ENCODE measurements at regions of chr6 and their contacts with region 1.

Region 1: DNA sequence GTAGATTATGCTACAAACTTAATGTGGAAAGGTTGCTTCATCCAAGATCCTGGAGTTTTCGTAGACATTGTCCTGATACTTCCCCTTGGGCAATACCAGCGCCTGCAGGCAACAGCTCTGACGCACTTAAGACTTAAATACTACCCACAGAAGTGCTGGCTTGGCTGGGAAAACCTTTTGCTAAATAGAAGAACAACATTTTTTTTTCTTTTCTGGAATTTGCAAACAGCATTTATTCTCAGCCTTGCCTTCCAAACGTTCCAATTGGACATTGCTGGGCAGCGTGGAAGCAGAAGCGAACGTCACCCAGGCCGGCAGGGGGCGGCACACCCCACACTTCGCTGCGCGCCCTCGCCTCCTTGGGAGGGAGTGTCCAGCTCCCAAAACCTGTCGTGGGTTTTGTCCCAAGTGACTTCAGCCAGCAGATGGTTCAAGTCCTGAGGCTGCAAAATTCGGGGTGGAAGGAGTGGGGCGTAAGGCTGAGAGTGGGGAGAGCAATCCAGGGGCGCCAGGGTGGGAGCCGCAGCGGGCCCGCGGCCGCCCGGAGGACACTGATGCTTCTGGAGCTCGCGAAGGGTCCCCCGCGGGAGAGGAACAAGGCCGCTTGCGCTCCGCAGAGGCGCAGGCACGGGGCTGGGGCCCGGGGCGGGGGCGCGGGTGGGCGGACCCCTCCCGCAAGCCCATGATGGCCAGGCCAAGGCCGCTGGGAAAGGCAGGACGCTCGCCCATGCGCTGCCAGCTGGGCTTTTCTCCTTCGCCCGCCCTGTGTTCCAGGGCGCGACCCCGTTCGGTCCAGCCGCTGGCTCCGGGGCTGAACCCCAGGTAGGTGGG is 60.8 kb upstream of the MAP3K4 start:
- DNase-seq: peak; percentile 82 to 94
- ATAC-seq: peak; percentile 91
- H3K4me3 ChIP-seq: peak overlapping the region; percentile 19 to 41
- H3K27ac ChIP-seq: no peak overlapping the region
- H3K4me1 ChIP-seq: no peaks in the 10 kb centered on the region
- H3K27me3 ChIP-seq: no peaks in the 10 kb centered on the region

Region 2: DNA sequence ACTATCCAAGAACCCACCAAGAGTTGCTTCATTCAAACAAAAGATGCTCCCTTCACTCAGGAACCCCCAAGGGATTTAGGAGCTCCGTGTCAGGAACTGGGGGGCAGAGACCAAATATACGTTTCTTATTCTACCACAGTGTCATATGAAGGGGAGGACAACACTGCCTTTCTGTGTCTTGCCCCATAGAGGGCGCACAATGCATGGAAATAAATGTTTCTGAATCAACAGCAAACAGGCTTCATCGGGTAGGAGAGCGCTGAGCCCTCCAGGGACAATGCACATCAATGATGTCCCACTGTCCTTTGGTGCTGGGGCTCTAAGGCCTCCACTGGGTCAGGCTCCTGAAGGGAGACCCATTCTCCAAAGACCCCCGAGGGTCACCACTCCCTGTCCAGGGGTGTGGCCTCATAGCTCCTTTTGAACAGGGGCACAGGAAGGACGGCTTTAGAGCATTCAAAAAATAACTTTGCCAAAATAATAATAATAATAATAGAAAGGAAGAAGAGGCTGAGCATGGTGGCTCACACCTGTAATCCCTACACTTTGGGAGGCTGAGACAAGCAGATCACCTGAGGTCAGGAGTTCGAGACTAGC is 197.6 kb before region 1 on chr6:
- intact Hi-C with region 1: loop called in 1 of 2 experiments (anchors 10 kb)
- DNase-seq: no peak
- ATAC-seq: peak; percentile 62
- H3K4me3 ChIP-seq: no peak overlapping the region
- H3K27ac ChIP-seq: no peak overlapping the region
- H3K4me1 ChIP-seq: no peaks in the 10 kb centered on the region
- H3K27me3 ChIP-seq: no peaks in the 10 kb centered on the region

Region 3: GRCh38 chr6:160791459-160791858 is 139.3 kb before region 1 on chr6:
- intact Hi-C with region 1: no loop called
- DNase-seq: no peak
- ATAC-seq: no peak
- H3K4me3 ChIP-seq: no peak overlapping the region
- H3K27ac ChIP-seq: no peak overlapping the region
- H3K4me1 ChIP-seq: no peaks in the 10 kb centered on the region
- H3K27me3 ChIP-seq: no peaks in the 10 kb centered on the region

Region 4: DNA sequence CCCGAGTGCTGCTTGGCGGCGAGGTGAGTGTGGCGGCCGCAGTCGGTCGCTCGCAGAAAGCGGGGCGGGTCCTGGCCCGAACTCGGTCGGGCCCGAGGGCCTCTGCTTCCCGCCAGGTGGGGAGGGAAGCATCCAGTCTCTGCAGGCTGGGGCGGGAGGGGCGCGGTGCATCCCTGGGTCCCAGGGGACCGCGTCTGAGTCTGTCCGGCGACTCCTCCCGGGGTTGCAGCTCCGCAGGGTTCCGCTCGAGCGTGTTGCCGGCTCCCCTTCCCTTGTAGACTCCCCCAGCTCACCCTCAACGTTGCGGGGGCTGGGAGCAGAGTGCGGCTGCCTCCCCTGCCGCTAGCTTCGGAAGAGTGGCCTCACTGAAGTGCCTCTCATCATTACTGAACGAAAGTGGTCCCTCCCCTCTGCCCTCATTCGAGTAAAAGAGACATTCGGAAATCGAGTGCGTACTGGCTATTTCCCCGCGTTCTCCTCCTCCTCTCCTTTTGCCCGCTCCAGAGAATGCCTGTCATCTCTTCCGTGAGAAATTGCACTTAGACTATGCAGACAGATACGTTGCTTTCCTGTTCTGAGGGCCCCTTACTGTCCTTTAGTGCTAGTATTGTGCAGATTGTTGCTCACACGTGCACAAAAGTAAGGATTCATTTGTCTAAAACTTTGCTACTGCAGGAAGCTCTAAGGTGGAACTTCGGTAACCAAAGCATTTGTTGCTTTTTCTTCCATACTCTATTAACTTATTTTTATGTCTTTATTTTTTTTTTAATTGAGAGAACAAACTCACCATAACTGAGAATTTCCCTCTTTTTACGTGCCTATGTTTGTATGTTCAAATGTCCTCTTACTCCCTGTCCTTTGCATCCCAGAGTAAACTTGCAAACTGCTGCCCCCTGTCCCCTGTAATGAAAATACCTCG is 61.6 kb after region 1 on chr6:
- intact Hi-C with region 1: loop called (anchors 2 kb)
- DNase-seq: peak in 1 of 2 donors; percentile 64
- ATAC-seq: peak; percentile 69
- H3K4me3 ChIP-seq: peak overlapping the region; percentile 50 to 88
- H3K27ac ChIP-seq: peak overlapping the region; percentile 23 to 56
- H3K4me1 ChIP-seq: peaks cover 0 to 4% of the 10 kb centered on the region in 2 donors
- H3K27me3 ChIP-seq: no peaks in the 10 kb centered on the region

Region 5: DNA sequence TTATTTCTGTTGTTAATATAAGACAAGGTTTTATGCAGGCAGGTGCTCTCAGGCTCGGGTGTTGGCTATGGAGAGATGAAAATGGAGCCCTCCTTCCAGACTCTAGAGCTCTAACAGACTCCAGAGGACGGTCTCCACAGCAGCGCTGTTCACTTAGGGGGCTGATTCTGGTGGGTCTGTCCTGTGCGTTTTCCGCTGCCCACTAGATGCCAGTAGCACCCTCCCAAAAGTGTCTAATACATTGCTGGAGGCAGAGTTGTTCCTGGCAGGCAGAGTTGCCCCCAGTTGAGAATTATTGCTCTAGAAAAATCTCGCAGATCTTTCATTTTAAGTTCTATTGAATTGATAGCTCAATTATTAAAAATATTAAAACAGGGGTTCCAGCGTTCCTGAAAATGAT is 170.8 kb after region 1 on chr6:
- intact Hi-C with region 1: no loop called
- DNase-seq: no peak
- ATAC-seq: no peak
- H3K4me3 ChIP-seq: no peak overlapping the region
- H3K27ac ChIP-seq: no peak overlapping the region
- H3K4me1 ChIP-seq: no peaks in the 10 kb centered on the region
- H3K27me3 ChIP-seq: no peaks in the 10 kb centered on the region

Region 6: DNA sequence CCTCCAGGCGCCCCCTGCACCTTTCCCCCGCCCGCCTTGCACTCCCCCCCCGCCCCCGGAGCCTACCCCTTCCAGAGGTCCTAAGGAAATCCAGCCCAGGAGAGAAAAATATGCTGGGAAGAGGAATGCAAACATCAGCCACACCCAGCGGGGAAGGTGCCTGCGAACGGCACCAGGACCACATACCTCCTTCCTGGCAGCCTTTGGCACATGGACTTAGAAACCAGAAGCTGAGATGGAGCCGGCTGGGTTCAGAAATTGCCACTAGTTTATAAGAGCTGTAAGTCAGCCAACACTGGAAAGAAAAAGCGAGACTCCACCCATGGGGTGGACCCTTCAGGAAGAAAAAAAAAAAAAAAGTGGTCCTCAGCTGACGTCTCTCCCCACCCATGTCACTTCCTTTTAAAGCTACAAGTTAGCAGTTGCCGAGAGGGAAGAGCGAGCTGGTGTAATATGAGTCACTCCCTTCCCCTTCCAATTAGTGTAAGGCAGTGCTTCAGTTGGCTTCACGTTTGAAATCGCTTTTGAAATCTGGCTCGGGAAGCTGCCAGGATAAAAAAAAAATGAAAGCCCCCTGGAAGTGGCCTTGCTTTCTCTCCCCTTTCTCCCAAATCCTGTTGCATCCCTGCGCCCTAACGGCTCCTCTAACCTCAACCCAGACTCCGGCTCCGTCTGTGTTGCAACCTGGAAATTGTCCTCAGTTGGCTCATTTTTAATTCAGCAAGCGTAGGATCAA is 343.2 kb after region 1 on chr6 and contains the start of gene AGPAT4:
- intact Hi-C with region 1: loop called in 1 of 2 experiments (anchors 10 kb)
- DNase-seq: peak; percentile 68 to 75
- ATAC-seq: peak; percentile 97
- H3K4me3 ChIP-seq: peak within 1 kb of the TSS; percentile 82 to 99
- H3K27ac ChIP-seq: peak within 1 kb of the TSS in 1 of 2 donors; percentile 51
- H3K4me1 ChIP-seq: no peaks in the 10 kb centered on the region
- H3K27me3 ChIP-seq: no peaks in the 10 kb centered on the region
- total RNA-seq, gene AGPAT4: 17.7 to 17.9 TPM